ENCODE measurements at regions of chrX and their contacts with region 1.

Region 1: DNA sequence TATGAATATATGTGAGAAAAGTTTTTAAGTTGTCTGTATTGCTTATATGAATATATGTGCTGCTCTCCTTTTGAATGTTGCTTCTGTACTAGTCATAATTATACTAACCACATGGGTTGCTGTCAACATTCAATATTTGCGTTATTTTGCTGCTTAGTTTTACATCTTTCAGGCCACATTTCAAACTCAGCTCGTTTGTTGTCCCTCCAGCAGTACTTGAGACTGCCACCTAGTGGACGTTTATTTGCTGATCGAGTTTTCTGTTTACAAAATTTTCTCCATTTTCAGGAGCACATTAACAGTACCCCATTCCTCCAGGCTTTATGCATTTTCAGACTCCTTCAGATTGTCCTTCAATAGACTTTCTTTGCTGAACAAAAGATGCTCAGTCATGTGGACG is 75.8 kb downstream of the NUDT11 start:
- DNase-seq: peak in 1 of 2 donors; percentile 9
- ATAC-seq: no peak
- H3K4me3 ChIP-seq: no peak overlapping the region
- H3K27ac ChIP-seq: no peak overlapping the region
- H3K4me1 ChIP-seq: no peaks in the 10 kb centered on the region
- H3K27me3 ChIP-seq: peaks cover 0 to 65% (median 0%) of the 10 kb centered on the region in 7 donors
- CTCF ChIP-seq: peak; percentile 37 to 82 (median 58)

Region 2: GRCh38 chrX:50483283-50483682 is 937.3 kb before region 1 on chrX:
- intact Hi-C with region 1: no loop called
- DNase-seq: no peak
- ATAC-seq: no peak
- H3K4me3 ChIP-seq: no peak overlapping the region
- H3K27ac ChIP-seq: no peak overlapping the region
- H3K4me1 ChIP-seq: no peaks in the 10 kb centered on the region
- H3K27me3 ChIP-seq: peaks cover 0 to 40% (median 0%) of the 10 kb centered on the region in 7 donors
- CTCF ChIP-seq: no peak

Region 3: DNA sequence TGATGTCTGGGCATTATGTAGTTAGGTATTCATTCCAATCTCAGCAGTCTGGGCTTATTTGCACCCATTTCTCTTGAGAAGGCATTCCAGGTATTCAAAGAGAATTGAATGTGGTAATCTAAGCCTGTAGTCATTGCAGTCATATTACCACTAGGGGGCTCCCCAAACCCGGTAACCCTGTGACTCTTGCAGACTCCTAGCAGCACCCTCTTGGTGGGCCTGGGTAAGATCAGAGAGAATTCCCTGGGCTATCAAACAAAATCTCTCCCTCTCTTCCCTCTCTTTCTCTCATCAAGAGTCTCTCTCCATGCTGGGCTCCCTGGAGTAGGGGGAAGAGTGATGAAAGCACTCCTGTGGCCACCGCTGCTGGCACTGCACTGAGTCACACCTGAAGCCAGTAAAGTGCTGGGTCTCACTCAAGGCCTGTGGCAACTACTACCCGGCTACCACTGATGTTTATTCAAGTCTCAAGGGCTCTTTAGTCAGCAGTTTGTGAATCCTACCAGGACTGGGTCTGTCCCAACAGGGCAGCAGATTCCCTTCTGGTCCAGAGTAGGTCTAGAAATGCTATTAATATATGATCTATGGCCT is 275.7 kb before region 1 on chrX:
- intact Hi-C with region 1: loop called in 1 of 10 experiments (anchors 5 kb)
- DNase-seq: no peak
- ATAC-seq: no peak
- H3K4me3 ChIP-seq: no peak overlapping the region
- H3K27ac ChIP-seq: no peak overlapping the region
- H3K4me1 ChIP-seq: no peaks in the 10 kb centered on the region
- H3K27me3 ChIP-seq: peaks cover 0 to 81% (median 0%) of the 10 kb centered on the region in 7 donors
- CTCF ChIP-seq: peak in 8 of 9 donors; percentile 7 to 67 (median 46)

Region 4: DNA sequence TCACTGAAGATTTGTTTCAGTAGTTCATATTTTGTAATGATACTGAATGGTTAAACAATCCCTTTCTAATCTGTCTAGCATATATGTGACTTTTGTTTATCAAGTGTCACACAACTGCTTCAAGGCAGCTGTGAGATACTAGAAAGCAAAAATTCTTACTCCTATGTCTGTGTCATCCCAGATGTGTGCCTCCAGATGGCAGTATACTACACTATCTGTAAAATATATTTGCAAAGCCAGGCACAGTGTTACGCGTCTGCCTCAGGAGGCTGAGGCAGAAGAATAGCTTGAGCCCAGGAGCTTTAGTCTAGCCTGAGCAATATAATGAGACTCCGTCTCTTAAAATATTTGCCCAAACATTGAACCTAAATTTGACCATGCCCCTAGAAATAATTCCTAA is 84.0 kb before region 1 on chrX:
- intact Hi-C with region 1: loop called in 7 of 10 experiments (anchors 2 to 10 kb)
- DNase-seq: peak in 1 of 2 donors; percentile 7
- ATAC-seq: peak in 4 of 8 donors; percentile 49 to 62 (median 56)
- H3K4me3 ChIP-seq: no peak overlapping the region
- H3K27ac ChIP-seq: no peak overlapping the region
- H3K4me1 ChIP-seq: no peaks in the 10 kb centered on the region
- H3K27me3 ChIP-seq: peaks cover 0 to 54% (median 0%) of the 10 kb centered on the region in 7 donors
- CTCF ChIP-seq: peak in 8 of 9 donors; percentile 5 to 65 (median 54)

Region 5: DNA sequence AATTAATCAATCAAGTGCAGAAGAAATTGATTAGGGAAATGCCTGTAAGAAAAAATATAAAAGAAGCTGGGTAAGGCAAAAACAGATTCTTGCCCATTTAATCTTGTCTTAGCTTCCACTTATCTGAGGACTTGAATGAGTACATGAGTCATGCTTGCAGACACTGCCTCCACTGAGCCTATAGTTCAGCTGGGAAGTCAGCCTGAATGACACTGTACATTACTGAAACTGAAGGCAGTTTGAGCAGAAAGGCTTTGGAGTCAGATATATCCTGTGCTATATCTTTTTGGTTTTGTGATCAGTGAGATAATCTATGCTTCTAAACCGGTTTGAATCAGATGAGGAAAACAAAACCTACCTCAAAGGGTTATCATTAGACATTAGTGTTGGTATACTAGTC is 14.5 kb after region 1 on chrX:
- intact Hi-C with region 1: loop called in 1 of 10 experiments (anchors 2 kb)
- DNase-seq: no peak
- ATAC-seq: no peak
- H3K4me3 ChIP-seq: no peak overlapping the region
- H3K27ac ChIP-seq: no peak overlapping the region
- H3K4me1 ChIP-seq: no peaks in the 10 kb centered on the region
- H3K27me3 ChIP-seq: peaks cover 0 to 42% (median 0%) of the 10 kb centered on the region in 7 donors
- CTCF ChIP-seq: no peak